ENCODE measurements at regions of chr11 and their contacts with region 1.

Region 1: DNA sequence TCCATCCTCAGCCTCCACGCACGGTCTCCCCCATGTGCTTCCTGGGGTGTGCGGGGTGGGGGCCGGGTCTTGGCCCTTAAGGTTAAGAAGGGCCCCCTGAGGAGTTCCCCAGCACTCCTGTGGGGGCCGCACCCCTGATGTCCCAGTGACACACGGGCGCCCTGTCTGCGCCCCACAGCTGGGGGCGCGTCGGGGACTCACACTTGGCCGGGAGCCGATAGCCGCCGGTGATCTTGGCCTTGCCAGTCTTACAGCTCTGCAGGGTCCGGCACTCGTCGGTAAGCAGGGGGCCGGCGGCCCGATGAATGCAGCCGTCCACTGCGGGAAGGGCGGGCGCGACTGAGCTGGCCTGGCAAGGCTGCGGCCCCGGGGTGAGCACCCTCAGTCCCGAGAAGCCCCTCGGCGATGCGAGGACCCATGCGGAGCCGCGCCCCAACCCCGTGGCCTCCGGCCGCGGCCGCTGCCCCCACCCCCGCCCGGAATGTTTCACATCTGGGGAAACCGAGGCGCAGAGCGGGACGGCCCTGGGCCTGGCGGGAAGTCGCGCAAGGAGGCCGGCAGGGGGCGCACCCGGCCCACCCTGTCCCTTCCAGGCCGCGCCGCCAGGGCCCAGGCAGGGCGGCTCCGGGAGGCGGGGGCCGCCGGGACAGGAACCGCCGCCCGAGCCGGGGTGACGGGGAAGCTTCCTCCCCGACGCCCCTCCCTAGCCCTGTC is 13.9 kb downstream of the OTUB1 start:
- DNase-seq: peak; percentile 86
- ATAC-seq: peak; percentile 81
- H3K4me3 Mint-ChIP-seq: no peak overlapping the region
- H3K27ac Mint-ChIP-seq: no peak overlapping the region
- H3K4me1 Mint-ChIP-seq: peaks cover 3% of the 10 kb centered on the region
- H3K27me3 Mint-ChIP-seq: peaks cover 2% of the 10 kb centered on the region

Region 2: GRCh38 chr11:63974259-63975143 is 25.7 kb before region 1 on chr11 and contains the start of gene COX8A:
- CTCF ChIA-PET with region 1: no interaction called
- POLR2A ChIA-PET with region 1: no interaction called
- intact Hi-C with region 1: loop called in 1 of 2 experiments (anchors 1 kb)
- DNase-seq: peak; percentile 97
- ATAC-seq: peak; percentile 100
- H3K4me3 Mint-ChIP-seq: peak within 1 kb of the TSS; percentile 95
- H3K27ac Mint-ChIP-seq: peak within 1 kb of the TSS; percentile 97
- H3K4me1 Mint-ChIP-seq: peaks cover 20% of the 10 kb centered on the region
- H3K27me3 Mint-ChIP-seq: no peaks in the 10 kb centered on the region
- total RNA-seq, gene COX8A: 413 to 454 TPM

Region 3: GRCh38 chr11:63986156-63986931 is 13.8 kb before region 1 on chr11 and contains the start of gene OTUB1:
- CTCF ChIA-PET with region 1: interaction called, 13 read pairs
- POLR2A ChIA-PET with region 1: no interaction called
- intact Hi-C with region 1: loop called in 1 of 2 experiments (anchors 1 kb)
- DNase-seq: peak; percentile 94
- ATAC-seq: peak; percentile 92
- H3K4me3 Mint-ChIP-seq: peak within 1 kb of the TSS; percentile 93
- H3K27ac Mint-ChIP-seq: peak within 1 kb of the TSS; percentile 89
- H3K4me1 Mint-ChIP-seq: peaks cover 23% of the 10 kb centered on the region
- H3K27me3 Mint-ChIP-seq: no peaks in the 10 kb centered on the region
- total RNA-seq, gene OTUB1: 77.4 to 86.1 TPM

Region 4: DNA sequence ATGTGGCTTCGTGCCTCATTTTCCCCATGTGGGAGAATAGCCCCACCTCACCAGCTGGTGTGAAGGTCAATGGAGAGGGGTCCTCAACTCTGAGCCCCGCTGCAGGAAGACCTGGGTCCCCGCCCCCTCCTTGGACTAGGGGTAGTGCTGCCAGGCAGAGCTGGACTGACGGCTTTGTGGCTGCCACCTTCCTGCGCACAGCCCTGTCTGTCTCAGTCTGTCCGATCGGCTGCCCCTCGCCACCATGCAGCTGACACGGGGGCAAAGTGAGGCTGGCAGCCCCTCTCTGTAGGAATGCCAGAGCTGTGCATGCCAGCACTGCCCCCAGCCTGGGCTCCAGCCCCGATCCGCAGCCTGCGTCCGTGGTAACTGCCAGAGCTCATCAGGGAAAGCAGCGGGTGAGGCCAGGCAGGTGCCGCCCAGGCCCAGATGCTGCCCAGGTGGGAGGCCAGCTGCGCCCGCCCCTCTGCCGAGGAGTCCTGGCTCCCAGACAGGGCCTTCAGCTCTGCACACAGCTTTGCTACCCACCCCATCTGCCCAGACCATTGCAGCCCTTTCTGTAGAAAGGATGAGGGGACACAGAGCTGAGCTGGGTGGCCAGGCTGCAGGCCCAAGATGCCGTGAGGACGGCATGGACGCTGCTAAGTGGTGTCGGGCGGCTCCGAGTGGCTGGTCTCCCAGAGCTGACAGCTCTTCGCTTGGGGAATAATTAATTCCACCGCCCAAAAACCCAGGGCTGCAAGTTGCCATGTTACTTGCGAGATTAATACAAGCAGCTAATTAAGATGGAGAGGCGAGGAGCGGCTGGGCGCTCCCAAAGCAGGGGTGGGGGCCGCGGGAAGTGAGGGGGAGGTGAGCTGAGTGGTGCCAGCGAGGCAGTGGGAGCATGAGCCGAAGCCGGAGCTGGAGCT is 16.0 kb after region 1 on chr11:
- CTCF ChIA-PET with region 1: interaction called, 10 read pairs
- POLR2A ChIA-PET with region 1: no interaction called
- intact Hi-C with region 1: no loop called
- DNase-seq: no peak
- ATAC-seq: no peak
- H3K4me3 Mint-ChIP-seq: no peak overlapping the region
- H3K27ac Mint-ChIP-seq: no peak overlapping the region
- H3K4me1 Mint-ChIP-seq: no peaks in the 10 kb centered on the region
- H3K27me3 Mint-ChIP-seq: no peaks in the 10 kb centered on the region

Region 5: DNA sequence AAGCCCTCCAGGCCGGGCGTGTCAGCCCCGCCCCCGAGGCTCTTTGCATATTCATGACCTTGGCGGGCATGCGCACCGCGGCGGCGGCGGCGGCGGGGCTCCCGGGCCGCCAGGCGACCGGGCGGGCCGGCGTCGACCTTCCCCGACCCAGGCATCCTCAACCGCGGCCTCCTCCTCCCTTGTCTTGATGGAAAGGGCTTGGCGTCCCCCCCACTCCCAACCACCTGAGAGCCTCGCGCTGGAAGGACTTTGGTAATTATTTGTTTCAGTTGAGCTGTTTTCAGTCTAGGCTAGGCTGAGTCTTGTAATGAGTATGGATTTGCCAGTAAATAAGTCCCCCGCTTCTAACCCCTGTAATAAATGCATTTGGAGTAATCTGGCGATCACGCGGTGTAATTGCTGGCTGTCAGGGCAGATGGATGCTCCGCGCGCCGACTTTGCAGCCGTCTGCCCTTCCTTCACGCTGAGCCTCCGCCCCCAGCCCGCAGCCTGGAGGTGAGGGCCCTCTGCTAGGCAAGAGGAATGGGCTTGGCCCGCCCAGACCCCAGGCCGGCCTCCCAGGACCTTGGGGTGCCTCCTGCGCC is 60.8 kb after region 1 on chr11:
- CTCF ChIA-PET with region 1: interaction called, 3 read pairs
- POLR2A ChIA-PET with region 1: no interaction called
- intact Hi-C with region 1: loop called in 1 of 2 experiments (anchors 2 kb)
- DNase-seq: peak; percentile 69
- ATAC-seq: peak; percentile 74
- H3K4me3 Mint-ChIP-seq: peak overlapping the region; percentile 54
- H3K27ac Mint-ChIP-seq: no peak overlapping the region
- H3K4me1 Mint-ChIP-seq: peaks cover 5% of the 10 kb centered on the region
- H3K27me3 Mint-ChIP-seq: peaks cover 16% of the 10 kb centered on the region

Region 6: DNA sequence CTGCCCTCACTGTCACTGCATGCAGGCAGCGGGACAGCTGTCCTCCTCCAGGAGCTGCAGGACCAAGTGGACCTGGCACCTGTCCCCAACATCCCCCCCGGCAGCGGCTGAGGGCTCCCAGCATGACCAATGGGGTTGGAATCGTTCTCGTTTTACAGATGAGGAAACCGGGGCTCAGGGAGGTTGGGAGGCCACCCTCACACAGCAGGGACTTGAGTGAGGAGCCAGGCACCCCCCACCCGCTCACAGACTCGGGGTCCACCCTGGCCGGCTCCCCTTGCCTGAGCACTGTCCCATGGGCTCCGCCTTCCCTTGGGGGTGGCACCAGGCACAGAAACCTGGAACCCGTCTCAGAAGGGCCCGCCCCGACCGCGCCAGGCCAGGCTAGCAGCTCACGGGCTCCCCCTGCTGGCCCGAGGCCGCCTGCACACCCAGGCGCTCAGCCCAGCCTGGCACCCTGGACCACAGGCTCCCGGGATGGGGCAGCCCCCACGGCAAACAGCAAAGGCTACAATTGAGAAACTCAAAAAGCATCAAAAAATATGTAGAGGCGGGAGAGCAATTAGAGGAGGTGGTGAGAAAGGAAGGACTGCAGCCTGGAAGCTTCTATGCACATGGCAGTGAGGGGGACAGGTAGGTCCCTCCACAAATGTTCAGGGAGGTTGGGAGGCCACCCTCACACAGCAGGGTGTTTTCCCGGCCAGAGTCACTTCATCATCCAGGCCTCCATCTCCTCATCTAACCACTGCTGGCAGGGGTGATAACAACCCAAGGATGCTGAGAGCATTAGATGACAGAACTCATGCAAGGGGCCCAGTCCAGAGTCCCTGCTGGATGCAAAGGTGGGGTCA is 152.9 kb after region 1 on chr11:
- CTCF ChIA-PET with region 1: interaction called, 80 read pairs
- POLR2A ChIA-PET with region 1: no interaction called
- intact Hi-C with region 1: loop called (anchors 1 kb)
- DNase-seq: peak; percentile 85
- ATAC-seq: peak; percentile 97
- H3K4me3 Mint-ChIP-seq: no peak overlapping the region
- H3K27ac Mint-ChIP-seq: no peak overlapping the region
- H3K4me1 Mint-ChIP-seq: peaks cover 3% of the 10 kb centered on the region
- H3K27me3 Mint-ChIP-seq: no peaks in the 10 kb centered on the region

Region 7: GRCh38 chr11:64372802-64373597 is 372.8 kb after region 1 on chr11:
- CTCF ChIA-PET with region 1: no interaction called
- POLR2A ChIA-PET with region 1: no interaction called
- intact Hi-C with region 1: no loop called
- DNase-seq: no peak
- ATAC-seq: peak; percentile 74
- H3K4me3 Mint-ChIP-seq: no peak overlapping the region
- H3K27ac Mint-ChIP-seq: no peak overlapping the region
- H3K4me1 Mint-ChIP-seq: no peaks in the 10 kb centered on the region
- H3K27me3 Mint-ChIP-seq: no peaks in the 10 kb centered on the region

Measured in activated CD4-positive, alpha-beta T cell treated with anti-CD3 and anti-CD28 coated beads for 36 hours (primary cell).